ENCODE measurements at regions of chr16 and their contacts with region 1.

Region 1: GRCh38 chr16:2595393-2596205 is 57.8 kb downstream of the PDPK1 start:
- DNase-seq: no peak
- ATAC-seq: no peak
- H3K4me3 ChIP-seq: no peak overlapping the region
- H3K27ac ChIP-seq: no peak overlapping the region
- H3K4me1 ChIP-seq: peaks cover 4% of the 10 kb centered on the region
- H3K27me3 ChIP-seq: no peaks in the 10 kb centered on the region
- CTCF ChIP-seq: no peak
- EP300 ChIP-seq: no peak
- POLR2A ChIP-seq: no peak
- RAD21 ChIP-seq: no peak

Region 2: DNA sequence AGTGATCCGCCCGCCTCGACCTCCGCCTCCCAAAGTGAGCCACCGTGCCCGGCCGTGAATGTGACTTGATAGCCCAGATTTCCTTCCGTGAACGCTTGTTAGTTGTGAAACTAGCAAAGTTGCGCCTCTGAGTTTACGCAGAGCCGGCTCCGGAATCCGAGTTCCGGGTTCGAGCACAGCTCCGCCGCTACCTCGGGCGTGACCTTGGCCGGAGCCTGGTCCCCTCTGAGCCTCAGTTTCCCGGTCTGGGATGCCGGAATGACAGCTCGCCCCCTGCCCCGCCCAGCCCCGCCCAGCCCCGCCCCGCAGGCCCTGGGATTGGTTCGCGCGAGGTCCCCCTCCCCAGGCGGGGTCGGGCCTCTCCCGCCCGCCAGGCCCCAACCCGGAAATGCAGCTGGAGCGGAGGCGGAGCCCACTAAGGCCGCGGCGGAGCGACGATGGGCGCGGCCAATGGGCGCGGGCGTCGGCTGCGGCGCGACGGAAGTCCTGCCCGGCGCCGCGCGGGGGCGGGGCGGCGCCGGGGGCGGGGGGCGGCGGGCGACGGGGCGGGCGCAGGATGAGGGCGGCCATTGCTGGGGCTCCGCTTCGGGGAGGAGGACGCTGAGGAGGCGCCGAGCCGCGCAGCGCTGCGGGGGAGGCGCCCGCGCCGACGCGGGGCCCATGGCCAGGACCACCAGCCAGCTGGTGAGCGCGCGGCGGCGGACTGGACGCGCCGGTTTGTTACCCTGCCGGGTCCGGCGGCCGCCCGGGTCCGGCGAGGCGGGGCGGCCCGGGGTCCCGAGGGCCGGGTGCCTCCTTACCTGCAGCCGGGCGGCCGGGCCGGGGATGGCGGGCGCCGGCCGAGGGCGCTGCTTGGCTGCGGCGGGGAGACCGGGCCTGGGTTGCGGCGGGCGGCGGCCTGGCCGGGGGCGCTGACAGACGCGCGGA is 57.9 kb before region 1 on chr16 and contains the start of gene PDPK1:
- CTCF ChIA-PET with region 1: no interaction called
- POLR2A ChIA-PET with region 1: no interaction called
- RAD21 ChIA-PET with region 1: no interaction called
- SMC1A ChIA-PET with region 1: no interaction called
- in situ Hi-C with region 1: loop called (anchors 5 kb)
- intact Hi-C with region 1: no loop called
- DNase-seq: peak; percentile 72
- ATAC-seq: peak; percentile 86
- H3K4me3 ChIP-seq: peak within 1 kb of the TSS; percentile 77
- H3K27ac ChIP-seq: peak within 1 kb of the TSS; percentile 75
- H3K4me1 ChIP-seq: peaks cover 6% of the 10 kb centered on the region
- H3K27me3 ChIP-seq: no peaks in the 10 kb centered on the region
- CTCF ChIP-seq: no peak
- EP300 ChIP-seq: no peak
- POLR2A ChIP-seq: peak; percentile 80
- RAD21 ChIP-seq: no peak
- polyA plus RNA-seq, gene PDPK1: 3.9 to 5.2 TPM

Measured in GM12878 (cell line).